Activated CD4-positive, alpha-beta memory T cell treated with anti-CD3 and anti-CD28 coated beads for 36 hours (primary cell): ENCODE measurements at regions of chr9 and their contacts with region 1.

Region 1: DNA sequence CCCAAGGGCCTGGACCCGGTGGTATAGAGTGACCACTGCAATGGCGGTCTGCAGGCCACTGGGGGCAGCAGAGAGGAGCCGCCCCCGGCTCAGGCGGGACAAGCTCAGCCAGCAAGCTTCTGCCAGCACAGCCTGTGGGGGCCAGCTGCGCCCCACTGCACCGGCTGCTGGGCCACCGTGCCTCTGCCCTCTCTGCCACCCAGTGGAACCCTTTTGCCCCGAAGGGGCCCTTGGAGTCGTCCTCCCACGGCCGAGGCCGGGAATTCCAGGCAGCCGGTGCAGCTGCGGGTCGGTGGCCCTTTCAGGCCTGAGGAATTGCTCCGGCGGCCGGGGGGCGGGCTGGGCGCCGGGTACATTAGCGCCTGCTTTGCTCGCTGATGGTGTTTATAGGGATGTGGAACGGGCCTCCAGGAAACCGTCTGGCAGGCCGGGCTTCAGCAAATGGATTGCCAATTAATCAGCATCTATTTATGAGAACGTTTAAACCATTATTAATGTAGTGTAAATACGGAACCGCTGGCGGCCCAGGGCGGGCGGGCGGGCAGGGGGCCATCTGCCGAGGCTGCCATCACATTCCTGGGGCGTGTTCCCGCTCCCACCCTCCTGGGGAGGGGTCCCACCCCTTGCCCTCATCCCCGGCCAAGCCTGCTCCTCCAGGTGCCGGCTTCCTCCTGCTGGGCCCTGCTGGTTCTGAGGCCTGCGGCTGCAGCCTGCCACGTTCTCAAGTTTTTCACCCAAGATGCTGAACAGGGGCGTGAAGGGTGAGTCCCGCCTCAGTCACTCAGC is 127.4 kb downstream of the BARX1 start:
- DNase-seq: peak; percentile 54
- H3K4me3 Mint-ChIP-seq: no peak overlapping the region
- H3K27ac Mint-ChIP-seq: no peak overlapping the region
- H3K4me1 Mint-ChIP-seq: peaks cover 10% of the 10 kb centered on the region
- H3K27me3 Mint-ChIP-seq: peaks cover 27% of the 10 kb centered on the region

Region 2: DNA sequence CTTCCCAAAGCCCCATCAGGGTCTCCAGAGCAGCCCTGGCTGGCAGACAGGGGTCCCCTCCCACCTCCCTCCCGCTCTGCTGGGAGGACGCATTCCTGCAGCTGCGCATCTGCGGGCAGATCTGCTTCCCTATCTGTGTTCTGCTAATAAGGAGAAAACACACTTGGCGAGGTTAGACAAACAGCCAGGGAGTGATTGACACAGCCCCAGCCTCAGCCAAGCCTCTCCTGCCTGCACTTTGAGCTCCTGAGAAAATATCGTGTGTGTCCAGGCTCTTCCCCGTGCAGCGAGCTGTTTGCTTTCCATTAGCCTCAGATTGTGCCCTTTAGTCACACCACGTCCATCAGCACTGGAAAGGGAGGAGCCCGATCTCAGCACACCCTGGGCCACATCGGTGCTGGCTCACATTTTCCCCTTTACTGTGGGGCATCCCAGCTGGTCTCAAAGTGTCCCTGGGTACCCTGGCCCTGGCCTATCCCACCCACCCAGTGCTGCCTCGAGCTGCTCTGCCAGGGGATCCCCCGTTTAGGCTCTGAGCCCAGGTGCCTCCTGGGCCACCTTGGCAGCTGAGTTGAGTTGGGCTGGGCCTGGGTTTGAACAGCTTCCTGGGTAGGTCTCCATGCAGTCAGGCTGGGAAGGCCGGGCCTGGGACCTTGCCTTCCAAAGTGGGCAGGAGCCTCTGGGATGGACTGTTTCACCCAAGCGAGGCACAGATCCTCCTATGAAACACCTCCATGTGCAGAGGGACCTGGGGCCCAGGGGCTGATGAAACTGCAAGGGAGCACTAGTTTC is 66.4 kb after region 1 on chr9:
- CTCF ChIA-PET with region 1: no interaction called
- POLR2A ChIA-PET with region 1: no interaction called
- intact Hi-C with region 1: no loop called
- DNase-seq: no peak
- H3K4me3 Mint-ChIP-seq: no peak overlapping the region
- H3K27ac Mint-ChIP-seq: no peak overlapping the region
- H3K4me1 Mint-ChIP-seq: peaks cover 16% of the 10 kb centered on the region
- H3K27me3 Mint-ChIP-seq: no peaks in the 10 kb centered on the region

Region 3: GRCh38 chr9:93962561-93963440 is 135.1 kb after region 1 on chr9:
- CTCF ChIA-PET with region 1: interaction called, 11 read pairs
- POLR2A ChIA-PET with region 1: no interaction called
- intact Hi-C with region 1: loop called (anchors 1 kb)
- DNase-seq: peak; percentile 88
- H3K4me3 Mint-ChIP-seq: no peak overlapping the region
- H3K27ac Mint-ChIP-seq: no peak overlapping the region
- H3K4me1 Mint-ChIP-seq: peaks cover 34% of the 10 kb centered on the region
- H3K27me3 Mint-ChIP-seq: peaks cover 41% of the 10 kb centered on the region